ENCODE measurements at regions of chr4 and their contacts with region 1.

Region 1: GRCh38 chr4:105061136-105061696 is 85.5 kb upstream of the TET2 start:
- DNase-seq: peak; percentile 21
- H3K4me3 Mint-ChIP-seq: peak overlapping the region; percentile 45
- H3K27ac Mint-ChIP-seq: peak overlapping the region; percentile 70
- H3K4me1 Mint-ChIP-seq: peaks cover 31% of the 10 kb centered on the region
- H3K27me3 Mint-ChIP-seq: no peaks in the 10 kb centered on the region
- CTCF ChIP-seq: no peak

Region 2: GRCh38 chr4:105227054-105227453 is 165.8 kb after region 1 on chr4:
- CTCF ChIA-PET with region 1: interaction called, 11 read pairs
- intact Hi-C with region 1: no loop called
- DNase-seq: no peak
- H3K4me3 Mint-ChIP-seq: no peak overlapping the region
- H3K27ac Mint-ChIP-seq: no peak overlapping the region
- H3K4me1 Mint-ChIP-seq: no peaks in the 10 kb centered on the region
- H3K27me3 Mint-ChIP-seq: no peaks in the 10 kb centered on the region
- CTCF ChIP-seq: no peak